Right lobe of liver (tissue), 6 donors: ENCODE measurements at regions of chr4 and their contacts with region 1.

Region 1: DNA sequence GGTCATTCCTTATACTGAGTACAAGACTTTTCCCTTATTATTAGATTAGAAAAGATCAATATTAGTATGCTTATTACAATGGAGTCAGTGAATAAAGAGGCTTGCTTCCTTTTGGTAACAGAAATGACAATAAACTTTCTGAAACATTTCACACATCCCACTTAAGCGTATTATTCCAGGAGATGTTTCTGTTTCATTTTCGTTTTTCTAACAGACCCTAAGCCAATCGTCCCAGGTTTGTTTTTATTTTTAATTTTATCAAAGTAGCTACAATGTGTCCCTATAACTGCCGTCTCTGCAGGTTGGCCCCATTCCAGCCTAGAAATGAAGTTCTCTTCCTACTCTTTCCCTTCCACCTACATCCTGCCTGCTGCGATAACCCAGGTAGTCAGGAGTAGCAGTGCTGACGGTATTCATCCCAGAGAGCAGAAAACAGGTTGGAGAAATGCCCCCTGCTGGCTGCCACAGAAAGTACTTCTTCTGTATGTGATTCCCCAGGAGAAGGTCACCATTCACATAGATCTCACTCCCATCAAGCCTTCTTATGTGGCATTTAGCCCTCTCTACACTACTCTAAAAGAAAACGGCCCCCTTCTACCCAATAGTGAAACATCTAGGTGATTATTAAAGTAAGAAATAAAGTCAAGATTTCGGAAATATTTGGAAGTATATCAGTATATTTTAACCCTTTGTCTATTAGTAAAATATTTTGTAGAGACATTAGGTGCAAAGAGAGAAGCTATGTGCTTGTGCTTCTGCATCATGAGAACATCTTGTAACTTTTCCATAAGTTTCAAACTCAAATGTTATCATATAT is 40.4 kb downstream of the ENPEP start:
- DNase-seq: peak; percentile 69 to 85 (median 73)
- ATAC-seq: peak; percentile 99 to 100 (median 99)
- H3K4me3 ChIP-seq: peak overlapping the region; percentile 41 to 53 (median 49)
- H3K27ac ChIP-seq: peak overlapping the region; percentile 56 to 74 (median 73)
- H3K4me1 ChIP-seq: peaks cover 0 to 4% (median 0%) of the 10 kb centered on the region in 4 donors
- H3K27me3 ChIP-seq: no peaks in the 10 kb centered on the region
- CTCF ChIP-seq: peak; percentile 75 to 80 (median 77)
- POLR2A ChIP-seq: no peak

Region 2: GRCh38 chr4:109998867-109999584 is 517.3 kb before region 1 on chr4:
- intact Hi-C with region 1: loop called in 1 of 2 experiments (anchors 10 kb)
- DNase-seq: no peak
- ATAC-seq: peak; percentile 86 to 93 (median 91)
- H3K4me3 ChIP-seq: no peak overlapping the region
- H3K27ac ChIP-seq: peak overlapping the region in 1 of 3 donors; percentile 22
- H3K4me1 ChIP-seq: no peaks in the 10 kb centered on the region
- H3K27me3 ChIP-seq: no peaks in the 10 kb centered on the region
- CTCF ChIP-seq: peak; percentile 69 to 84 (median 76)
- POLR2A ChIP-seq: no peak

Region 3: DNA sequence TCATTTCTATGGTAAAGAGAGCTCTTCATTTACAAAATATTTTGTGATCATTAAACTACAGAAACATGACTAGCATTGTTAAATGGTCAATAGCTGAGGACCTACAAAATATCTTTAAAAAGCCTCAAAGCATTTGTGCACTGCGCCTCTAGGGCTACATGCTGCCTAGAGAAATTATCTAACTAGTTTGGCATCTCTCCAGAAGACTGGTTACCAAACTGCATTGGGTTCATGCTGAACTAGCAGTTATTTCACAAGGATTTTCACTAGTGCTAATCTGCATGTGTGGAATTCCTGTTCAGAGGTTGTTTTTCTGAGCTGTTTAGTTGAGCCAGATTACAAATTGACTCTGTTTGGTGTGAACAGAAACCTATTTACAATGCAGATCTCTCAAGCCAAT is 165.1 kb after region 1 on chr4:
- intact Hi-C with region 1: no loop called
- DNase-seq: no peak
- ATAC-seq: no peak
- H3K4me3 ChIP-seq: no peak overlapping the region
- H3K27ac ChIP-seq: no peak overlapping the region
- H3K4me1 ChIP-seq: no peaks in the 10 kb centered on the region
- H3K27me3 ChIP-seq: no peaks in the 10 kb centered on the region
- CTCF ChIP-seq: no peak
- POLR2A ChIP-seq: no peak